ENCODE measurements at regions of chr19 and their contacts with region 1.

Region 1: GRCh38 chr19:41753936-41754529 is 1.3 kb upstream of the CEACAM6 start:
- DNase-seq: peak; percentile 48 to 84
- ATAC-seq: peak; percentile 87 to 95 (median 91)
- H3K4me3 ChIP-seq: no peak overlapping the region
- H3K4me3 Mint-ChIP-seq: no peak overlapping the region
- H3K27ac ChIP-seq: no peak overlapping the region
- H3K27ac Mint-ChIP-seq: no peak overlapping the region
- H3K4me1 ChIP-seq: no peaks in the 10 kb centered on the region
- H3K4me1 Mint-ChIP-seq: peaks cover 5 to 7% of the 10 kb centered on the region in 2 donors
- H3K27me3 ChIP-seq: peaks cover 2% of the 10 kb centered on the region
- H3K27me3 Mint-ChIP-seq: peaks cover 26 to 37% of the 10 kb centered on the region in 2 donors
- CTCF ChIP-seq: peak; percentile 70

Region 2: DNA sequence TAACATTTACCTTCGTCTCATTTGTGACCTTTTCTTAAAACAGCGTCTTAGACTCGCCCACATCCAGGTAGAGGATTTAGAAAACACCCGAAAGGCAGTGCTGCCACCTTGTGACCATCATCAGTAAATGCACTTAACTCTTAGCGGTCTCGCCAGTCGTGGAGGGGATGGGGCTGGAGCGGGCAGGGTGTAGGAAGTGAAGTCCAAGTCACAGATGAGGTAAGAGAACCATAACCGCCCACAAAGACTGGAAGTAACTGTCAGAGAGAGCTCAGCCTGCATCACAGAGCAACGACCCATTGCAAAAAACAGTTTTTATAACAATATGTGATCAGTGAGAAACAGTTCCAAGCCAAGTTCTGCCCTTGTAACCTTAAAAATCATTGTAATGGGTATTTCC is 31.6 kb after region 1 on chr19:
- intact Hi-C with region 1: loop called (anchors 1 kb)
- DNase-seq: peak; percentile 43 to 93
- ATAC-seq: peak; percentile 85 to 96 (median 95)
- H3K4me3 ChIP-seq: no peak overlapping the region
- H3K4me3 Mint-ChIP-seq: peak overlapping the region; percentile 43
- H3K27ac ChIP-seq: no peak overlapping the region
- H3K27ac Mint-ChIP-seq: no peak overlapping the region
- H3K4me1 ChIP-seq: peaks cover 12% of the 10 kb centered on the region
- H3K4me1 Mint-ChIP-seq: peaks cover 15 to 18% of the 10 kb centered on the region in 2 donors
- H3K27me3 ChIP-seq: peaks cover 2% of the 10 kb centered on the region
- H3K27me3 Mint-ChIP-seq: peaks cover 18 to 32% of the 10 kb centered on the region in 2 donors
- CTCF ChIP-seq: peak; percentile 83

Region 3: GRCh38 chr19:41893899-41894298 is 139.9 kb after region 1 on chr19:
- intact Hi-C with region 1: no loop called
- DNase-seq: peak in 1 of 2 donors; percentile 58
- ATAC-seq: peak; percentile 48 to 70 (median 49)
- H3K4me3 ChIP-seq: no peak overlapping the region
- H3K4me3 Mint-ChIP-seq: peak overlapping the region; percentile 42
- H3K27ac ChIP-seq: peak overlapping the region; percentile 39
- H3K27ac Mint-ChIP-seq: peak overlapping the region; percentile 77 to 92
- H3K4me1 ChIP-seq: peaks cover 89% of the 10 kb centered on the region
- H3K4me1 Mint-ChIP-seq: peaks cover 45 to 75% of the 10 kb centered on the region in 2 donors
- H3K27me3 ChIP-seq: no peaks in the 10 kb centered on the region
- H3K27me3 Mint-ChIP-seq: no peaks in the 10 kb centered on the region
- CTCF ChIP-seq: no peak